Gastrocnemius medialis (tissue), 4 donors: ENCODE measurements at regions of chr15 and their contacts with region 1.

Region 1: GRCh38 chr15:99275525-99276128 is 24.3 kb downstream of the LRRC28 start:
- DNase-seq: no peak
- ATAC-seq: peak in 1 of 2 donors; percentile 35
- H3K4me3 ChIP-seq: no peak overlapping the region
- H3K27ac ChIP-seq: no peak overlapping the region
- H3K4me1 ChIP-seq: no peaks in the 10 kb centered on the region
- H3K27me3 ChIP-seq: no peaks in the 10 kb centered on the region
- CTCF ChIP-seq: no peak
- POLR2A ChIP-seq: no peak

Region 2: DNA sequence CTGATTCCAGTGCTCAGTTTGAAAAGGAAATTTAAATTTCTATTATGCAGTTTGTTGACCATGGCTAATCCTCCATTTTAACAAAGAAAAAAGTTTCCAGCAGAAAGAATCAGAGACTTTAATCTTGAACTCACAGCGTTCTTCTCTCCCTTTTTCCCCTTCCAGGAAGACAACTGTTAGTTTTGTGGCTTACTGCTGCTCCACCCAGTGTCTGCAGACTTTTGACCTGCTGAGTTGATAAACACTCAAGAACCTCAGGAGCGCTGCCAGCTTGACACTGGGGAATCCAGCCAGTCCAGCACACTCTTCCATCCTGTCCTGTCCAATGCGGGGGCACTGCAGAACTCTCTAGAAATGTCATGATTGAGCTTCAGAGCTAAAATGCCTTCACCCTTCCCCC is 110.2 kb after region 1 on chr15:
- in situ Hi-C with region 1: loop called in 1 of 4 experiments (anchors 25 kb)
- intact Hi-C with region 1: no loop called
- DNase-seq: peak in 1 of 2 donors; percentile 57
- ATAC-seq: peak; percentile 68 to 75
- H3K4me3 ChIP-seq: no peak overlapping the region
- H3K27ac ChIP-seq: no peak overlapping the region
- H3K4me1 ChIP-seq: peaks cover 12 to 23% of the 10 kb centered on the region in 2 donors
- H3K27me3 ChIP-seq: no peaks in the 10 kb centered on the region
- CTCF ChIP-seq: no peak
- POLR2A ChIP-seq: no peak